Kidney (tissue), 22 donors: ENCODE measurements at regions of chr1 and their contacts with region 1.

Region 1: GRCh38 chr1:1122078-1122811 is 6.4 kb upstream of the C1orf159 start:
- DNase-seq: peak; percentile 86 to 95 (median 90)
- H3K4me3 ChIP-seq: peak overlapping the region in 1 of 3 donors; percentile 22
- H3K27ac ChIP-seq: no peak overlapping the region
- H3K4me1 ChIP-seq: peaks cover 0 to 9% (median 0%) of the 10 kb centered on the region in 3 donors
- H3K27me3 ChIP-seq: peaks cover 2% of the 10 kb centered on the region
- CTCF ChIP-seq: peak; percentile 78

Region 2: GRCh38 chr1:1231400-1232223 is 109.4 kb after region 1 on chr1 and contains the start of gene SDF4:
- intact Hi-C with region 1: loop called (anchors 10 kb)
- DNase-seq: peak; percentile 97 to 99 (median 97)
- H3K4me3 ChIP-seq: peak within 1 kb of the TSS; percentile 79 to 98 (median 93)
- H3K27ac ChIP-seq: peak within 1 kb of the TSS; percentile 69 to 82
- H3K4me1 ChIP-seq: peaks cover 0 to 25% (median 12%) of the 10 kb centered on the region in 3 donors
- H3K27me3 ChIP-seq: no peaks in the 10 kb centered on the region
- CTCF ChIP-seq: no peak
- total RNA-seq, gene SDF4: 160 TPM

Region 3: DNA sequence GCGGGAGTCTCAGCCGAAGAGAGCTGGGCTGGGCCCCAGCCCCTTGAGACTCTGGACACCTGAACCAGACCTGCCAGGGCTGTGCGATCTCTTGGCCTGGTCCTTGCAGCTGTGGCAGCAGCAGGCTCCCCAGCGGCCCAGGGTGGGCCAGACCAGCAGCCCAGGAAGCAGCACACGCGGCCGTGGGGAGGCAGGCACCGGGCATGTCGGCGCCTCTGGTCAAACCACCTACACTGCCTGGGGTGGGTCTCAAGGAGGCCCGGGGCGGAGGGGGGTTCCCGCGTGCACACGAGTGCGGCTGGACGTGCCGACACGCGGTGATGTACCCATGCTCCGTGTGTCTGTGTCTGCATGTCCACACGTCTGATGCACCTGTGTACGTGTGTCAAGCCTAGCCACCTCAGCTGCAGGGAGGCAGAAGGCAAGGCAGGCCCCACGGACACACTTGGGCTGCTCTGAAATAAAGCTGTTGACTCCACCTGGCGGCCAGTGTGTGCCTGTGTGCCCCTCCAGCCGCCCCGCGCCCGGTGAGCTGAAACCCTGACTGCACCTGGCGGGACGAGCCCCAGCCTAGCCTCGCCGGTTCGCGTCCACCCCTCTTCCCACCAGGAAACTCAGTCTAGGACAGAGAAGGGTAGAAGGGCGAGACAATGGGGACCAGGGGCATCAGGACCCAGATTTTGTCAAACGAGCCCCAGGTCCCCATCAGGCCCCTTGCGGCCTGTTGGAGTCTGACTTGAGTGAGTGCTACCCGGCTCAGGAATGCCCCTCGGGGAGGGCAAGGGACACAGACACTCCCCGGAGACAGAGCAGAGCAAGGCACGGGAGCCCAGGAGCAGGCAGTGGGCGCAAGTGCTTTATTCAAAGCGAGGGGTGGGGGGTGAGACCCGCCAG is 169.6 kb after region 1 on chr1:
- intact Hi-C with region 1: loop called (anchors 10 kb)
- DNase-seq: peak in 4 of 5 donors; percentile 77 to 89 (median 84)
- H3K4me3 ChIP-seq: no peak overlapping the region
- H3K27ac ChIP-seq: no peak overlapping the region
- H3K4me1 ChIP-seq: peaks cover 0 to 5% (median 0%) of the 10 kb centered on the region in 3 donors
- H3K27me3 ChIP-seq: no peaks in the 10 kb centered on the region
- CTCF ChIP-seq: peak; percentile 71

Region 4: DNA sequence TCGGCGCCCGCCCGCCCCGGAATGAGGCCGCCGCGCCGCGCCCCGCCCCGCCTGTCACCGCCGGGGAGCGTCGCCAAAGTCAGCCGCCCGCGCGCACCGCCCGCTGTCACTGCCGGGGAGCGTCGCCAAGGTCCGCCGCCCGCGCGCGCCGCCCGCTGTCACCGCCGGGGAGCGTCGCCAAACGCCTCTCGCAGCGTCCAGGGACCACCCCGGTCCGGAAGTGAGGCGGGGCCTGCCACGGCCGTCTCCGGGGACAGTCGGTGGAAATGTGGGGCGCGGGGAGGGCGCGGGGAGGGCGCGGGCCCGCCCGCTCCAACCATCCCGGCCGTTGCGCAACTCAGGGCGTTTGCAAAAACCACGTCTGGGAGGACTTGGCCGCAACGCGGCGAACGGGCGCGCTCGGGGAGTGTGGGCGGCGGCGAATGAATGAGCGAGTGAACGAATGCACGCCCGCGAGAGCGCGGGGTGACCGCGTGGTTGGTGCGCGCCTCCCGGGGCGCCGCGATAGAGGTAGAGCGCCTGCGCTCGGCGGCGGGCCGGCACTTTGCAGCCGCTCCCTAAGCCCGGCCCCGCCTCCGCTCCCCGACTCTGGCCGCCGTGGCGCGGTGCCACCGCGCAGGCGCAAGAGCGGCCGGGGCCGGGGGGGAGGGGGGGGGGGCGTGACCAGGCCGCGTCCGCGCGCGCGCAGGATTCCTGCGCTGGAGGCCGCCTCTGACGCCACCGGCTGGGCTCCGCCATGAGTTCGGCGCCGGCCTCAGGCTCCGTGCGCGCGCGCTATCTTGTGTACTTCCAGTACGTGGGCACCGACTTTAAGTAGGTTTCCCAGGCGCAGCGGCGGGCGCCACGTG is 185.9 kb after region 1 on chr1 and contains the starts of genes ACAP3 and PUSL1:
- intact Hi-C with region 1: no loop called
- DNase-seq: peak; percentile 89 to 97 (median 94)
- H3K4me3 ChIP-seq: peak within 1 kb of the TSS; percentile 53 to 77 (median 74)
- H3K27ac ChIP-seq: peak within 1 kb of the TSS; percentile 90 to 92
- H3K4me1 ChIP-seq: peaks cover 0 to 36% (median 12%) of the 10 kb centered on the region in 3 donors
- H3K27me3 ChIP-seq: no peaks in the 10 kb centered on the region
- CTCF ChIP-seq: no peak
- total RNA-seq, gene ACAP3: 39.5 TPM
- total RNA-seq, gene PUSL1: 12.6 TPM